ENCODE measurements at regions of chr3 and their contacts with region 1.

Region 1: GRCh38 chr3:109532257-109533216 is 195.2 kb upstream of the DPPA4 start:
- DNase-seq: peak in 1 of 2 donors; percentile 59
- ATAC-seq: peak; percentile 44
- H3K4me3 ChIP-seq: no peak overlapping the region
- H3K27ac ChIP-seq: no peak overlapping the region
- H3K4me1 ChIP-seq: no peaks in the 10 kb centered on the region
- H3K27me3 ChIP-seq: no peaks in the 10 kb centered on the region

Region 2: GRCh38 chr3:110314512-110315114 is 782.1 kb after region 1 on chr3:
- intact Hi-C with region 1: loop called (anchors 10 kb)
- DNase-seq: peak in 1 of 2 donors; percentile 44
- ATAC-seq: no peak
- H3K4me3 ChIP-seq: no peak overlapping the region
- H3K27ac ChIP-seq: no peak overlapping the region
- H3K4me1 ChIP-seq: no peaks in the 10 kb centered on the region
- H3K27me3 ChIP-seq: no peaks in the 10 kb centered on the region

Measured in aorta (tissue), 5 donors.